ENCODE measurements at regions of chr9 and their contacts with region 1.

Region 1: GRCh38 chr9:127586537-127586936 is 25.5 kb upstream of the STXBP1 start:
- DNase-seq: peak in 1 of 2 experiments; percentile 75
- H3K4me3 ChIP-seq: no peak overlapping the region
- H3K27ac ChIP-seq: no peak overlapping the region
- H3K4me1 ChIP-seq: peaks cover 0 to 3% (median 0%) of the 10 kb centered on the region in 4 experiments; a peak in 2 of 7 replicates
- H3K27me3 ChIP-seq: no peaks in the 10 kb centered on the region
- CTCF ChIP-seq: peak; percentile 88 to 95 (median 94)
- EP300 ChIP-seq: no peak
- POLR2A ChIP-seq: no peak
- RAD21 ChIP-seq: peak; percentile 89 to 92

Region 2: DNA sequence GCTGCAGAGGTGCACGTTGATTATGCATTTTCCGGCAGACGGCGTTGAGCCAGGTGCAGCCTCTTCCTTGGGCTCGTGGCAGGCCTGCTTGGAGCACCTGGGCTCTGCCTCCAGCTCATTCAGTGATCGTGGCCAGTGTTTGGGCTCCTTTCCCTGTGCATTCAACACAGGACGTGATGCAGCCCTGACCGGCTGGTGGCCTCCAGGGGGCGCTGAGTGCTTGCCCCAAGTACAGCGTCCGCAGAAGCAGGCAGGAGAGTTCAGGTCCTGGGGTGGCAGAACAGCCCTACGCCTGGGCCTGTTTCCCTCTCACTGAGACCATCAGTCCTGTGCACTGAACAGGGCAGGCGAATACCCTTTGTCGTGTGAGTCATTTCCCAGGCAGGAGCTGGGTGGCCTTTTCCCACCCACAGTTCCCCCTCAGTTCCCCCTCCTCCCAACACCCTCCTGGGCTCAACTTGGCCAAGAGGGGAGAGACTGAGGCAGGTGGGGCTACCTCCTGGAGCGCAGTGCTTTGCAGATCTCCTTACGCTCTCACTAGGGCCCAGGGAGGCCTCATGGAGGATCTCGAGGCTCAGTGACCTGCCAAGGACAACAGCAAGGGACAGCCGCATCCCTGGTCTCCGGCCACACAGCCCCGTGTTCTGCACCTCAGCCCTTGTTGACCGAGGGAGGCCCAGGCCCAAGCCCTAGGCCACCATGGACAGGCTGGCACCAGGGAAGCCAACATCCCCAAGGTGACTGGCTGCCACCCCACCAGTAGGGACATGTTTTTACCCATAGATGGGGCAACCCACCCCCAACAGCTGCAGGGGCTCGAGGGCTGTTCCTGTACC is 82.4 kb before region 1 on chr9:
- CTCF ChIA-PET with region 1: interaction called, 193 read pairs
- POLR2A ChIA-PET with region 1: interaction called, 3 read pairs
- DNase-seq: peak; percentile 88 to 92
- H3K4me3 ChIP-seq: no peak overlapping the region
- H3K27ac ChIP-seq: 0 out of 2 replicates have a peak overlapping the region, but pooled peaks have one; percentile 45
- H3K4me1 ChIP-seq: peaks cover 0 to 3% (median 0%) of the 10 kb centered on the region in 4 experiments; a peak in 2 of 7 replicates
- H3K27me3 ChIP-seq: no peaks in the 10 kb centered on the region
- CTCF ChIP-seq: peak in 2 of 3 experiments; percentile 98 to 99; a peak in 3 of 4 replicates
- EP300 ChIP-seq: no peak
- POLR2A ChIP-seq: no peak
- RAD21 ChIP-seq: peak; percentile 93 to 96

Region 3: GRCh38 chr9:127525401-127526187 is 60.9 kb before region 1 on chr9:
- CTCF ChIA-PET with region 1: interaction called, 73 read pairs
- POLR2A ChIA-PET with region 1: no interaction called
- DNase-seq: no peak
- H3K4me3 ChIP-seq: no peak overlapping the region
- H3K27ac ChIP-seq: no peak overlapping the region
- H3K4me1 ChIP-seq: peaks cover 6 to 31% (median 11%) of the 10 kb centered on the region in 4 experiments
- H3K27me3 ChIP-seq: no peaks in the 10 kb centered on the region
- CTCF ChIP-seq: peak in 2 of 3 experiments; percentile 64 to 80; a peak in 3 of 4 replicates
- EP300 ChIP-seq: no peak
- POLR2A ChIP-seq: no peak
- RAD21 ChIP-seq: peak; percentile 54 to 61

Region 4: GRCh38 chr9:127537792-127538191 is 48.7 kb before region 1 on chr9:
- CTCF ChIA-PET with region 1: interaction called, 89 read pairs
- POLR2A ChIA-PET with region 1: no interaction called
- DNase-seq: no peak
- H3K4me3 ChIP-seq: no peak overlapping the region
- H3K27ac ChIP-seq: no peak overlapping the region
- H3K4me1 ChIP-seq: peaks cover 4 to 13% (median 10%) of the 10 kb centered on the region in 4 experiments; a peak in 5 of 7 replicates
- H3K27me3 ChIP-seq: no peaks in the 10 kb centered on the region
- CTCF ChIP-seq: peak in 2 of 3 experiments; percentile 65 to 80; a peak in 3 of 4 replicates
- EP300 ChIP-seq: no peak
- POLR2A ChIP-seq: no peak
- RAD21 ChIP-seq: peak; percentile 71 to 81

Region 5: GRCh38 chr9:127598839-127599548 is 12.5 kb after region 1 on chr9:
- CTCF ChIA-PET with region 1: interaction called, 17 read pairs
- POLR2A ChIA-PET with region 1: interaction called, 4 read pairs
- DNase-seq: no peak
- H3K4me3 ChIP-seq: no peak overlapping the region
- H3K27ac ChIP-seq: no peak overlapping the region
- H3K4me1 ChIP-seq: peaks cover 0 to 3% (median 1%) of the 10 kb centered on the region in 4 experiments; a peak in 2 of 7 replicates
- H3K27me3 ChIP-seq: no peaks in the 10 kb centered on the region
- CTCF ChIP-seq: no peak
- EP300 ChIP-seq: no peak
- POLR2A ChIP-seq: no peak
- RAD21 ChIP-seq: no peak

Region 6: GRCh38 chr9:127667127-127667844 is 80.7 kb after region 1 on chr9:
- CTCF ChIA-PET with region 1: interaction called, 10 read pairs
- POLR2A ChIA-PET with region 1: no interaction called
- DNase-seq: no peak
- H3K4me3 ChIP-seq: no peak overlapping the region
- H3K27ac ChIP-seq: no peak overlapping the region
- H3K4me1 ChIP-seq: no peaks in the 10 kb centered on the region
- H3K27me3 ChIP-seq: no peaks in the 10 kb centered on the region
- CTCF ChIP-seq: no peak
- EP300 ChIP-seq: no peak
- POLR2A ChIP-seq: no peak
- RAD21 ChIP-seq: no peak

Measured in H1 (cell line).